ENCODE measurements at regions of chr19 and their contacts with region 1.

Region 1: GRCh38 chr19:35495107-35496064 is 5.1 kb upstream of the KRTDAP start:
- DNase-seq: peak; percentile 83
- H3K4me3 Mint-ChIP-seq: no peak overlapping the region
- H3K27ac Mint-ChIP-seq: no peak overlapping the region
- H3K4me1 Mint-ChIP-seq: peaks cover 4% of the 10 kb centered on the region
- H3K27me3 Mint-ChIP-seq: no peaks in the 10 kb centered on the region

Region 2: GRCh38 chr19:35247526-35248306 is 247.7 kb before region 1 on chr19:
- CTCF ChIA-PET with region 1: no interaction called
- intact Hi-C with region 1: loop called (anchors 2 kb)
- DNase-seq: peak; percentile 76
- H3K4me3 Mint-ChIP-seq: peak overlapping the region; percentile 86
- H3K27ac Mint-ChIP-seq: peak overlapping the region; percentile 90
- H3K4me1 Mint-ChIP-seq: peaks cover 13% of the 10 kb centered on the region
- H3K27me3 Mint-ChIP-seq: no peaks in the 10 kb centered on the region

Region 3: DNA sequence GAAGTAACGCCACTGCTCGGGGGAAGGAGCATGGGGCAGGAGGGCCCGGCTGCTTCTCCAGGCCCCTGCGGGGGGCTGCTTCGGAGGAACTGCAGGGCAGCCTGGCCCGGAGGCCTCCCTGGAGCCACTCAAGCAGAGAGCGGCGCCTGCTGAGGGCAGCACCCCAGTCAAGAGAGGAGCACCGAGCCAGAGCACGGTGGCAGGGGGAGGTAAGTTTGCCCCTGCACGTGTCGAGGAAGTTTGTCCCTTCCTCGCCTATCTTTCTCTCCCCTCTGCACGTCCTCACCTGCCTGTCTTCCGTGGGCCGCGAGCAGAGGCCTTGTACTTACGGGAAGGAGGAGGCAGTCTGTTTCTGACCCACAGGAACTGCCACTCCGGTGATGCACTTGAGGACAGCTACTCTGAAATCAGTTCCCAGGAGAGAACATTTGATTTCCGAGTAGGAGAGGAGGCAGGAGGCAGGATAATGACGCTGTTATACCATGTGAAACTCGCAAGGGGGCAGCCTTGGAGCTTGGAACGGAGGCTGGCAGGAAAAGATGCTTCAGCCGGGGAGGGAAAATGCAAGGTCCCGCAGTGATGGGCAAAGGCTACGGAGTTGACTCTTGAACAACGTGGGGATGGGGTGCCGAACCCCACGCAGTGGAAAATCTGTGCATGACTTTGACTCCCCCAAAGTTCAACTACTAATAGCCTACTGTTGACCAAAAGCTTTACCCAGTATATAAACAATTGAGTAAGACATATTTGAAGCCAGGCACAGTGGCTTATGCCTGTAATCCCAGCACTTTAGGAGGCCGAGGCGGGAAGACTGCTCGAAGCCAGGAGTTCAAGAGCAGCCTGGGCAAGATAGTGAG is 142.7 kb before region 1 on chr19:
- CTCF ChIA-PET with region 1: interaction called, 44 read pairs
- intact Hi-C with region 1: loop called (anchors 1 kb)
- DNase-seq: peak; percentile 85
- H3K4me3 Mint-ChIP-seq: no peak overlapping the region
- H3K27ac Mint-ChIP-seq: no peak overlapping the region
- H3K4me1 Mint-ChIP-seq: peaks cover 22% of the 10 kb centered on the region
- H3K27me3 Mint-ChIP-seq: no peaks in the 10 kb centered on the region

Region 4: GRCh38 chr19:35419805-35420204 is 75.6 kb before region 1 on chr19:
- CTCF ChIA-PET with region 1: interaction called, 3 read pairs
- intact Hi-C with region 1: loop called (anchors 1 kb)
- DNase-seq: no peak
- H3K4me3 Mint-ChIP-seq: no peak overlapping the region
- H3K27ac Mint-ChIP-seq: no peak overlapping the region
- H3K4me1 Mint-ChIP-seq: no peaks in the 10 kb centered on the region
- H3K27me3 Mint-ChIP-seq: no peaks in the 10 kb centered on the region

Region 5: GRCh38 chr19:35484252-35485036 is 10.9 kb before region 1 on chr19:
- CTCF ChIA-PET with region 1: interaction called, 15 read pairs
- intact Hi-C with region 1: no loop called
- DNase-seq: peak; percentile 39
- H3K4me3 Mint-ChIP-seq: no peak overlapping the region
- H3K27ac Mint-ChIP-seq: no peak overlapping the region
- H3K4me1 Mint-ChIP-seq: peaks cover 6% of the 10 kb centered on the region
- H3K27me3 Mint-ChIP-seq: no peaks in the 10 kb centered on the region

Region 6: GRCh38 chr19:35509861-35510625 is 14.7 kb after region 1 on chr19:
- CTCF ChIA-PET with region 1: interaction called, 24 read pairs
- intact Hi-C with region 1: no loop called
- DNase-seq: peak; percentile 80
- H3K4me3 Mint-ChIP-seq: peak overlapping the region; percentile 57
- H3K27ac Mint-ChIP-seq: no peak overlapping the region
- H3K4me1 Mint-ChIP-seq: peaks cover 15% of the 10 kb centered on the region
- H3K27me3 Mint-ChIP-seq: peaks cover 36% of the 10 kb centered on the region

Region 7: DNA sequence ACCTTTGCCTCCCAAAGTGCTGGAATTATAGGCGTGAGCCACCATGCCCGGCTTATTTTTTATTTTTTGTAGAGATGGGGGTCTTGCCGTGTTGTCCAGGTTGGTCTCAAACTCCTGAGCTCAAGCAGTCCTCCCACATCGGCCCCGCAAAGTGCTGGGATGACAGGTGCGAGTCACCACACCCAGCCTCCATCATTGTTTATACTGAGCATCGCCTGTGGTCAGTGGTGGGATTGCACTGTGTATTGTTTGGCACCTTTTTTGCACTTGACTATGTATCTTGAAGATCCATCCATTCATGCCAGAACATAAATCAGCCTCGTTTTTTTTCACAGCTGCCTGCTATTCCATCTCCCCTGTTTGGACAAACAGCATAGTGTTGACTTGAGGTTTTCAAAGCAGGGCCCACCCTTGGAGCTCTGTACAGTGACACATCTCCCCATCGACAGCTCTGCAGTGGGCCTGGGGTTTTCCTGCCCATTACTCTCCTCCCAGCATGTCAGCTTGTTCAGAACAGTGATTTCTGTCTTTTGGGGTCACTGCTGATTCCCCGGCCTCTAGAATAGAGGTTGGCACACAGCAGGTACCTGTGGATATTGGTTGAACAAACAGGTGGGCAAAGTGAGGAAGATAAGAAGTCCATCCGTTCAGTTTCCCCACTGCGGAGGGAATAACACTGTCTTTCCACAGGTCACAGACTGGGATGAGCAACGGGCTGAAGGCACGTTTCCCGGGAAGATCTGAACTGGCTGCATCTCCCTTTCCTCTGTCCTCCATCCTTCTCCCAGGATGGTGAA is 162.7 kb after region 1 on chr19:
- CTCF ChIA-PET with region 1: no interaction called
- intact Hi-C with region 1: no loop called
- DNase-seq: no peak
- H3K4me3 Mint-ChIP-seq: no peak overlapping the region
- H3K27ac Mint-ChIP-seq: no peak overlapping the region
- H3K4me1 Mint-ChIP-seq: peaks cover 6% of the 10 kb centered on the region
- H3K27me3 Mint-ChIP-seq: no peaks in the 10 kb centered on the region

Measured in activated naive CD4-positive, alpha-beta T cell treated with anti-CD3 and anti-CD28 coated beads for 36 hours (primary cell).